Activated CD4-positive, alpha-beta memory T cell treated with anti-CD3 and anti-CD28 coated beads for 36 hours (primary cell): ENCODE measurements at regions of chr5 and their contacts with region 1.

Region 1: GRCh38 chr5:180769821-180770220 is 30.0 kb upstream of the OR2Y1 start:
- DNase-seq: no peak
- H3K4me3 Mint-ChIP-seq: no peak overlapping the region
- H3K27ac Mint-ChIP-seq: no peak overlapping the region
- H3K4me1 Mint-ChIP-seq: no peaks in the 10 kb centered on the region
- H3K27me3 Mint-ChIP-seq: peaks cover 14% of the 10 kb centered on the region

Region 2: GRCh38 chr5:180390441-180391190 is 379.2 kb before region 1 on chr5:
- CTCF ChIA-PET with region 1: no interaction called
- POLR2A ChIA-PET with region 1: no interaction called
- intact Hi-C with region 1: no loop called
- DNase-seq: no peak
- H3K4me3 Mint-ChIP-seq: no peak overlapping the region
- H3K27ac Mint-ChIP-seq: no peak overlapping the region
- H3K4me1 Mint-ChIP-seq: no peaks in the 10 kb centered on the region
- H3K27me3 Mint-ChIP-seq: peaks cover 5% of the 10 kb centered on the region

Region 3: DNA sequence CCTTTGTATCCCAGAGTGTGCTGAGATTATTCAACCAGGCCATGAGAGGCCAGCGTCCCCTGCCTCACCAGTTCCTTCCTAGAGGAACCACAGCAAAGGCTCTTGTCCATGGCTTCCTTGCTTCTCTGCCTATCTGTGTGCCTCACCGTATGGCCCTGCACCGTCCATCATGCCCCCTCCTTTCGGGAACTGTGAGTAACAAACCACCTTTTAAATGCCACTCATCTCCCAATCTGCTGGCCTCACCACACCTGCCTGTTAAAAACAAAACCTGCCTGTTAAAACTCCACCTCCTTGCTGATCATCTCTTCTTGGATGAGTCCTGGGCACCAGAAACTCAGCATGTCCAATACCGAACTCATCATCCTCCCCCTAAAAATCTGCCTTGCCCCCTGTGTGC is 25.6 kb before region 1 on chr5:
- CTCF ChIA-PET with region 1: no interaction called
- POLR2A ChIA-PET with region 1: no interaction called
- intact Hi-C with region 1: loop called (anchors 1 kb)
- DNase-seq: no peak
- H3K4me3 Mint-ChIP-seq: no peak overlapping the region
- H3K27ac Mint-ChIP-seq: no peak overlapping the region
- H3K4me1 Mint-ChIP-seq: no peaks in the 10 kb centered on the region
- H3K27me3 Mint-ChIP-seq: peaks cover 16% of the 10 kb centered on the region

Region 4: DNA sequence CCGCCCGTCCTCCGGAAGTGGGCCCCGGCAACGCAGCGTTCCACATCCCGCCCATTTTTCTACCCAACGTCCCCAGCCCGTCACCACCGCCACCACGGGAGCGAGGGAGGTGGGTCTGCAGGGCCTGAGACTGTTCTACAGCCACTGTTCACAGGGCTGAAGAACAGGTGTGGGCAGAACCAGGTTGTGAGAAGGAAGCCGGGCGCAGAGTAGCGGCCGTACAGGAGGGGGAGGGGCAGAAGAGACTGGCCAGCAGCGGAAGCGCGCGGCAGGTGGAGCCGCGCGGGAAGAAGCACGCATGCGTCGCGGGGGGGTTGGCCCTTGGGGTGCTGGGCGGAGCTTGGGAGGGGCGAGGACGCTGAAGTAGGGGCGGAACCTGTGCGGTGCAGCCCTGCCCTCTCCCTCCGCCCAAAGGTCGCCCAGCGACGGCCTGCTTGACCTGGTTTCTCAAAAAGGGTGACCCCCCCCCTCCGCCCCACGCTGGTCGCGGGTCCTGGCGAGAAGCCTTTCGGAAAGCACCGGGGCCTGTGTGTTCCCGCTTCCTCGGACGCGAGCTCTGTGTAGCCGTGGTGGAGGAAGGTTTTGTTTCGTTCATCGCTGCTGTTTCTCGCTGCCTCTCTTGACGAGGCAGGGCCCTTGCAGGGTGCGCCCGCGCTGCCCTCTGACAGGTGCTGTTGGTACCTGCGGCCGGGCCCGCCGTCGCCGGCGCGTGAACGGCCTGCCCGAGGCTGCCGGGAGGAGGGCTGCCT is 40.6 kb after region 1 on chr5:
- CTCF ChIA-PET with region 1: no interaction called
- POLR2A ChIA-PET with region 1: no interaction called
- intact Hi-C with region 1: no loop called
- DNase-seq: peak; percentile 97
- H3K4me3 Mint-ChIP-seq: peak overlapping the region; percentile 94
- H3K27ac Mint-ChIP-seq: peak overlapping the region; percentile 99
- H3K4me1 Mint-ChIP-seq: peaks cover 69% of the 10 kb centered on the region
- H3K27me3 Mint-ChIP-seq: no peaks in the 10 kb centered on the region

Region 5: GRCh38 chr5:180831139-180832048 is 61.6 kb after region 1 on chr5:
- CTCF ChIA-PET with region 1: no interaction called
- POLR2A ChIA-PET with region 1: no interaction called
- intact Hi-C with region 1: no loop called
- DNase-seq: peak; percentile 86
- H3K4me3 Mint-ChIP-seq: peak overlapping the region; percentile 99
- H3K27ac Mint-ChIP-seq: peak overlapping the region; percentile 99
- H3K4me1 Mint-ChIP-seq: peaks cover 39% of the 10 kb centered on the region
- H3K27me3 Mint-ChIP-seq: no peaks in the 10 kb centered on the region